ENCODE measurements at regions of chr12 and their contacts with region 1.

Region 1: GRCh38 chr12:103771466-103771865 is 69.6 kb downstream of the NT5DC3 start:
- DNase-seq: peak; percentile 48 to 66
- H3K4me3 ChIP-seq: no peak overlapping the region
- H3K27ac ChIP-seq: no peak overlapping the region
- H3K4me1 ChIP-seq: peaks cover 10 to 32% (median 17%) of the 10 kb centered on the region in 4 donors
- H3K27me3 ChIP-seq: no peaks in the 10 kb centered on the region
- CTCF ChIP-seq: peak in 4 of 7 experiments; percentile 26 to 53 (median 36)
- EP300 ChIP-seq: no peak
- POLR2A ChIP-seq: no peak

Region 2: GRCh38 chr12:103860903-103861763 is 89.7 kb after region 1 on chr12:
- intact Hi-C with region 1: loop called (anchors 10 kb)
- DNase-seq: no peak
- H3K4me3 ChIP-seq: no peak overlapping the region
- H3K27ac ChIP-seq: peak overlapping the region in 1 of 5 donors; percentile 83
- H3K4me1 ChIP-seq: peaks cover 0 to 15% (median 4%) of the 10 kb centered on the region in 4 donors
- H3K27me3 ChIP-seq: no peaks in the 10 kb centered on the region
- CTCF ChIP-seq: no peak
- EP300 ChIP-seq: no peak
- POLR2A ChIP-seq: no peak

Region 3: GRCh38 chr12:104072099-104072498 is 300.6 kb after region 1 on chr12:
- intact Hi-C with region 1: no loop called
- DNase-seq: no peak
- H3K4me3 ChIP-seq: no peak overlapping the region
- H3K27ac ChIP-seq: no peak overlapping the region
- H3K4me1 ChIP-seq: peaks cover 0 to 33% (median 14%) of the 10 kb centered on the region in 4 donors
- H3K27me3 ChIP-seq: no peaks in the 10 kb centered on the region
- CTCF ChIP-seq: no peak
- EP300 ChIP-seq: no peak
- POLR2A ChIP-seq: no peak

Measured in stomach (tissue), 19 donors.